Pancreas (tissue), 10 donors: ENCODE measurements at regions of chr6 and their contacts with region 1.

Region 1: DNA sequence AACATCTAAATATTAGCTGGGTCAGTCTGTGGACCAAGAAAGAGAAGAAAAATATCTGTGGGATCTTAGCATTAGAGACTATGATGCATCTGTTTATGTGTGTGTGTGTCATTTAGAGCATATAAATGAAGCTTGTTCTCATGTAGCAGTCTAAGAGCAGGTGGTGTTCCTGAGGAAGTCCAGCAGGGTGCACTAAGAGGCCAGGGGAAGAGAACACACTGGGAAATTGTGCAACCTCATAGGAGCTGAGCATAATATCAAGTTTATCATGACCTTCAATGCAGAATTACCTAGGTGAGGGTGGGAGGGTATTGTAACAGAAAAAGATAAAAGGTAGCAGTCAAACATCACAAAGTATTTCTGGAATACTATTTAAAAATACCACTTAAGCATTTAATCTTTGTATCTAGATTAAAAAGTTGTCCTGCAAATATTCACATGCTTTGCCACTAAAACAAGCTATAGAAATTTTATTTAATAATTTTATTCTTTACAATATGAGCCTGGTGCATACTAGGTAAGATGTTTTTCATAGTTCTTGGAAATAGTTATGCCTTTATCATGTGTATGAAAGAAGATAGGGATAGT is 80.5 kb downstream of the SMPDL3A start:
- DNase-seq: peak in 3 of 6 donors; percentile 9 to 48 (median 16)
- ATAC-seq: peak; percentile 75 to 98 (median 94)
- H3K4me3 ChIP-seq: no peak overlapping the region
- H3K27ac ChIP-seq: no peak overlapping the region
- H3K4me1 ChIP-seq: no peaks in the 10 kb centered on the region
- H3K27me3 ChIP-seq: peaks cover 0 to 4% (median 0%) of the 10 kb centered on the region in 4 donors
- CTCF ChIP-seq: peak in 3 of 4 donors; percentile 41 to 50 (median 48)

Region 2: GRCh38 chr6:123316733-123317323 is 447.3 kb after region 1 on chr6:
- intact Hi-C with region 1: loop called in 2 of 3 experiments (anchors 5 to 10 kb)
- DNase-seq: no peak
- ATAC-seq: no peak
- H3K4me3 ChIP-seq: no peak overlapping the region
- H3K27ac ChIP-seq: no peak overlapping the region
- H3K4me1 ChIP-seq: no peaks in the 10 kb centered on the region
- H3K27me3 ChIP-seq: no peaks in the 10 kb centered on the region
- CTCF ChIP-seq: peak in 3 of 4 donors; percentile 53 to 60 (median 53)

Region 3: DNA sequence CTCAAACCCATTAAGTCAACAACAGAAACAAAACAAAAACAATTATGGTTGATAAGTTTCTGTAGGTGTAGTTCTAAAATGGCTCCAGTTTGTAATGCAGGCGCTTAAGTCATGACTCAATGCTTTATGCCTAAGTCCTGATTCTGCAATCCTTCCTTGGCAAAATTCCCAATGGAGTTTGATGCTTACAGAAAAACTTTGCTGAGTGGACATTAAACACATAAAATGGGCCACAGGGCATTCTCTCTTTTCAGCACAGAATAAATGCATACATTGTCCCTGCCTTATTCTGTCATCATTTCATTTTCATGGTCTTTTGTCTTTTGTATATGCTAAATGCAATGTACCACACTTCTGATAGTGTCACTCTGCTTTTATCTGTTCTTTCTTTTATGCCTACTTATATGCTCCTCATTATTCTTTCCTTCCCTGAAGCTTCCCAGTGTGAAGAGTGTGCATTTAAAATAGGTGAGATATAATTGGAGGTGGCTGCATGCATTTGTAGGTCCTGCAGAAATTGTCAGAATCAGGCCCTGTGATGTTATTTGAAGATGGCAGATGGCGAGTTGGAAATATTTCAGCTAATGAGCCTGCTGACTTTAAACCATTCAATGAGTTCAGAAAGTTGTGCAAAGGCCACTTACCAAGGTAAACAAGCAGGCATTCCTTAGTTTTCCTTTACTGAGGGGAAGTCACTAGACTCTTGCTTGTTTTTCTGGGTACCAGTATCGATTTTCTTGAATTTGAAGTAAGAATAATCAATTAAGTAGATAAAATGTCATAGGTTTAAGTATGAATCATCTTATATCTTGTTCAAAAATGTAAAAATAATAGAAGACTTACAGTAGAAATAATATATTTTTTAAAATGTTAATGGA is 454.2 kb after region 1 on chr6:
- intact Hi-C with region 1: loop called in 2 of 3 experiments (anchors 5 to 10 kb)
- DNase-seq: no peak
- ATAC-seq: no peak
- H3K4me3 ChIP-seq: no peak overlapping the region
- H3K27ac ChIP-seq: no peak overlapping the region
- H3K4me1 ChIP-seq: no peaks in the 10 kb centered on the region
- H3K27me3 ChIP-seq: no peaks in the 10 kb centered on the region
- CTCF ChIP-seq: no peak